Activated CD4-positive, alpha-beta memory T cell treated with anti-CD3 and anti-CD28 coated beads for 36 hours (primary cell): ENCODE measurements at regions of chr12 and their contacts with region 1.

Region 1: GRCh38 chr12:12442548-12443071 is 85.7 kb downstream of the BORCS5 start:
- DNase-seq: no peak
- H3K4me3 Mint-ChIP-seq: peak overlapping the region; percentile 30
- H3K27ac Mint-ChIP-seq: peak overlapping the region; percentile 91
- H3K4me1 Mint-ChIP-seq: peaks cover 88% of the 10 kb centered on the region
- H3K27me3 Mint-ChIP-seq: no peaks in the 10 kb centered on the region

Region 2: DNA sequence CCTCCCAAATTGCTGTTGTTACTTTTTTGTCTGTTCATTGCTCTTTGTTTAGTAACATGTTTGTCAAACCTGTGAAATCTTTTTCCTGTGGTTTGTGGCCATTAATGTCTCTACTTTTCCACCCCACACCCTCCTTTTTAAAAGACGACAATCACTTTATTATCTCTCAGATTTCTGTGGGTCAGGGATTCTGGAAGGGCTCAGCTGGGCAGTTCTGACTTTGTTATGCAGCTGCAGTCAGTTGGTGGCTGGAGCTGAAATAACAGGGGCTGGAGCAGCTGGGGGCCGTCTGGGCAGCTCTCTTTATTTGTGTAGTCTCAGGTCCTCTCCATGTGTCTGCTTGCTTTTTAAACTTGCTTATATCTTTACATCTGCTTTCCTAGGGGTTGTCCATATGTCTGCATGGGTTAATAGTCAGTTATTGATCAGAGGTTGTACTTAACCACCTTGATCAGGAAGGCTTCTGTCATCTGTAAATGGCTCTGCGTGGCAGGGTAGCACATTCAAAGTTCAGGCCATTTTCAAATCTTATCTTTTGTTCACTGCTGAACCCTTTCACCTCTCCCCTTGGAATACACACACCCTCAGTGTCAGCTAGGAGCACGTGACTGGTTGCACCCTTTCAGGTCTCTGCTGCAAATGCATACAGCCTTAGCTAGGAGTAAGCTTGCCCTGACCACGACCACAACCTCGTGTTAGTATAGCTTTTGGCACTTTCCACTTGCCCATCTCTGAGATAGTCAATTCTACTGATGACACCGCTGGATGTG is 57.9 kb before region 1 on chr12:
- CTCF ChIA-PET with region 1: interaction called, 4 read pairs
- POLR2A ChIA-PET with region 1: interaction called, 13 read pairs
- intact Hi-C with region 1: loop called (anchors 1 kb)
- DNase-seq: peak; percentile 80
- H3K4me3 Mint-ChIP-seq: peak overlapping the region; percentile 48
- H3K27ac Mint-ChIP-seq: peak overlapping the region; percentile 93
- H3K4me1 Mint-ChIP-seq: peaks cover 68% of the 10 kb centered on the region
- H3K27me3 Mint-ChIP-seq: no peaks in the 10 kb centered on the region

Region 3: GRCh38 chr12:12415886-12416285 is 26.7 kb before region 1 on chr12:
- CTCF ChIA-PET with region 1: no interaction called
- POLR2A ChIA-PET with region 1: interaction called, 7 read pairs
- intact Hi-C with region 1: loop called (anchors 1 kb)
- DNase-seq: no peak
- H3K4me3 Mint-ChIP-seq: no peak overlapping the region
- H3K27ac Mint-ChIP-seq: peak overlapping the region; percentile 59
- H3K4me1 Mint-ChIP-seq: peaks cover 28% of the 10 kb centered on the region
- H3K27me3 Mint-ChIP-seq: no peaks in the 10 kb centered on the region

Region 4: DNA sequence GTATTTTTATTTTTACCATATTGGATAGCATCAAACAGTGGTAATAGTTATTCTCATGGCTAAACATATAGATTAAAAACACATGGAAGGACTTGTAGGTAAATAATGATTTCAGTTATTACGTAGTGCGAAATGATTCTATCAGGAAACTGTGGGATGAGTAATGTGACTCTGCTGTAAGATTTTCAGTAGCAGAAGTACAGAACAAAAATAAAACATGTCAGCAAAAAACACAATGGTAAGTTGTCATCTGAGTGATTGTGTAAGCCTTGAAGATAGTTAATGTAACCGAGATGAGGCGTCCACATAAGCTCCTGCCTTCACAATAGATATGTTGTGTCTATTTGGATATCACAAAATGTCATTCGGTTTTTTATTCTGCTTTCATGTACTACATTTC is 14.0 kb after region 1 on chr12:
- CTCF ChIA-PET with region 1: interaction called, 24 read pairs
- POLR2A ChIA-PET with region 1: interaction called, 39 read pairs
- intact Hi-C with region 1: loop called (anchors 1 kb)
- DNase-seq: no peak
- H3K4me3 Mint-ChIP-seq: peak overlapping the region; percentile 47
- H3K27ac Mint-ChIP-seq: peak overlapping the region; percentile 93
- H3K4me1 Mint-ChIP-seq: peaks cover 63% of the 10 kb centered on the region
- H3K27me3 Mint-ChIP-seq: no peaks in the 10 kb centered on the region

Region 5: DNA sequence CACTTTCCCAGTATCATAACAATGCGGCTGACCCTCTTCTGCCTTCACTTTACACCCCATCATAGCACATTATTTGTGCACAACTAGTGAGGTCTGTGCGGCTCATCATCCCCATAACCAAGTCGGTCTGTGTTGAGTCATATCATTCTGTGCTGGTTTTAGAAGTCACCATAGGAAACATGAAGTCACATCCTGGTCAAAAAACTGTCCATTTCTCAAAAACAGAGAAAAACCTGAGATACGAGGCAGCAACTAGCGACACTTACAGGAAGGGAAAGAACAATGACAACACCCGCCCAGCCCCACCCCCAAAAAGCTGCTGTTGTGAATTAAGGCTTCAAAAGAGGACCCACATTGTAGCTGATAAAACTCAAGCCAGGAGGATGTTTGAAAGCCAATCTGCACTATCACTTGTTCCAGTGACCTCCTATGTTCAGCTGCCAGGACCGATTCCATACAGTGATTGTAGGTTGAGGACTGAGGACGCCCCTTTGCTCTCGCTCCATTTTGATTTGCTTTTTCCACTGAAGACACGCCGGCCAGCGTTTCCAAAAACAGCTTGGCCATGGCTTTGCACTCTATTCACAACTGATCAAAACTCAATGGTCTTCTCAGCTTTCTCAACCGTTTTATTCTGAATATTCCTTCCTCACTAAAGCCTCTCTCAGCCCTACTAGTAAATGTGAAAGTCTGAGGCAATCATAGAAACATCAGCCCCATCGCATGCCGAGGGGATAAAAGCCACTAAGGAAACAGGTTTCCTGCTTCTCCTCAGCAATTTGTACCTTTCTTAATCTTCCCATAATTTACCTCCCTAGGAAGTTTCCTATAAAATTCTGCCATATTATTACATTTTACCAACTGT is 32.6 kb after region 1 on chr12:
- CTCF ChIA-PET with region 1: interaction called, 23 read pairs
- POLR2A ChIA-PET with region 1: interaction called, 46 read pairs
- intact Hi-C with region 1: loop called (anchors 1 kb)
- DNase-seq: peak; percentile 86
- H3K4me3 Mint-ChIP-seq: peak overlapping the region; percentile 63
- H3K27ac Mint-ChIP-seq: peak overlapping the region; percentile 99
- H3K4me1 Mint-ChIP-seq: peaks cover 82% of the 10 kb centered on the region
- H3K27me3 Mint-ChIP-seq: no peaks in the 10 kb centered on the region

Region 6: DNA sequence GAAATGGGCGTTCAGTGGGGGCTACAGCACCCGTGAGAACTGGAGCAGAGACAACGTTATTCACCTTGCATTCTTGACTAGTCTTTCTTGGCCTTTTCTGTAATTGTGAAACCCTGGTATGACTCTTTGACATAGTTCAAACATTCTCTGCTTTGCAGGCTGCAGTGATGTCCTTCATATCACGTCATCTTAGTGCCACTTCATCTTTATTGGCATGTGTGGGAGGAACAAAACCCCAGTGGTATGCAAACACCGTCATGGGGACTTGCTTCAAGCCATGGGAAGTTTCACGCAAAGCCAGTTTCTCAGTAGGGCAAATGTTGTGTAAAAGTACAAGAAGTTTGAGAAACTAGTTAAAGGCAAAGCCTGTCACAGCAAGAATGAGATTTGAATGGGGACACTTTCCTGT is 140.3 kb after region 1 on chr12:
- CTCF ChIA-PET with region 1: no interaction called
- POLR2A ChIA-PET with region 1: no interaction called
- intact Hi-C with region 1: loop called (anchors 1 kb)
- DNase-seq: peak; percentile 81
- H3K4me3 Mint-ChIP-seq: peak overlapping the region; percentile 40
- H3K27ac Mint-ChIP-seq: peak overlapping the region; percentile 84
- H3K4me1 Mint-ChIP-seq: peaks cover 50% of the 10 kb centered on the region
- H3K27me3 Mint-ChIP-seq: peaks cover 3% of the 10 kb centered on the region